Lower leg skin (tissue), 4 donors: ENCODE measurements at regions of chr12 and their contacts with region 1.

Region 1: DNA sequence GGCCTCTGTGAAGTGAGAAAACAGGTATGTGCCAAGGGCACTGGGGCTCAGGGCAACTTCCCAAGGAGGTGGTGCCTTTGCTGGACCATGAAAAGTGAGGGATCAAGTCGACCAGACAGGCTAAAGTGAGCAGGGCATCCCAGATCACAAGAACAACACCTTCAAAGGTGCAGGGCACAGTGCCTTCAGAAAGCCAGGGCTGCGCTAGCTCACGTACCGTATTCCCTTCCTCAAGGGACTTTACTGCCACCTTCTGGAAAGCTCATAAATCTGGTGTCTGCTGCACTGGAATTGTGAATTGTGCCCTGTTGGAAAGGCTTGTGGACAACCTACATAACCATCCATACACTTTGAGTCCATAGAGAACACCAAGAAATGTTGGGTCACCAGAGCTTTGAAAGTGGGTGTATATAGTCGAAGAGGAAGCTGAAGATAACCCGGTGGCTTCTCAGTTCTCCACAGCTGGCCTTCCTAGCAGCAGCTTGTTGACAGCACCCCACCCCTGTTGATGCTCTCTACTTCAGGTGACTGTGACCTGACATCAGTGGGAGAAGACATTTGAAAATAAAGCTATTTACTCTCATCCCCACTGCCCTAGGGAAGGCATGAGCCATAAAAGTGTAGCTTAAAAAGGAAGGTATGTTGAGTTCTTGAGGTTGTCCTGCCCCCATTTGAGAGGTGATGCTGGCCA is 24.5 kb downstream of the FIGNL2 start:
- DNase-seq: no peak
- H3K4me3 ChIP-seq: no peak overlapping the region
- CTCF ChIP-seq: no peak
- POLR2A ChIP-seq: no peak

Region 2: DNA sequence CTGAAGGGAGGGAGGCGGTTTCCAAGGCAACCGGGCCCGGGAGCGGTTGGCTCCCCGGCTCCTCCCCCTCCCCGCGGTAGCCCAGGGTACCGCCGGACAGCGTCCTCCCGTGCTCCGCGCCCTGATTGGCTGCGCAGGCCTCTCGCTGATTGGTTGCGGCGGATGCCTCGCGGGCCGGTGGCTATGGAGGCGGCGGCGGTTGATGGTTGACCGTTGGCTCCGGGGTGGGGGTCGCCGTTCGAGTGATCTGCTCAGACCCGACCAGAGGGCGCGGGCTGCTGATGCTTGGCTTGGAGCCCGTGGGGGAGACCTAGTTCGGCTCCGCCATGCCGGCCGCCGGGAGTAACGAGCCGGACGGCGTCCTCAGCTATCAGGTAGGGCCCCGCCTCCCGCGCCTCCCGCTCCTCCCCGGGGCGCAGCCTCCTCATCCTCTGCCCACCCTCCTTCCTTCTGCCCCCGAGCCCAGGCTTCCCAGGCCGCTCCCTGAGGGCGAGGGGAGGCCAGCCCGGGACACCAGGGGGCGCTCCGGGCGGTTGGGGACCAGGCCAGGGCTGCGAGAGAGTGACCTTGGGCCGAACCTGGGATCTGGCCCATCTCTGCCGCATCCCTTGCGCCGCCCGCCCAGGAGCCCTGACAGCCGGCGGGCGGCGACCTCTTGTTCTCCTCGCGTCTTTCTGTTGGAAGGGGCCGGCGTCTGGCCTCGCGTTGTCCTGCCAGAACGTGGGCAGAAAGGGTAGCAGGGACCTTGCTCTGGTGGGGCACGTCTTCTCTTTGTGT is 399.2 kb before region 1 on chr12 and contains the start of gene SLC4A8:
- intact Hi-C with region 1: loop called (anchors 10 kb)
- DNase-seq: peak; percentile 24 to 89
- H3K4me3 ChIP-seq: no peak within 1 kb of the TSS
- CTCF ChIP-seq: no peak
- POLR2A ChIP-seq: no peak
- total RNA-seq, gene SLC4A8: 0.04 to 0.13 (median 0.06) TPM

Region 3: DNA sequence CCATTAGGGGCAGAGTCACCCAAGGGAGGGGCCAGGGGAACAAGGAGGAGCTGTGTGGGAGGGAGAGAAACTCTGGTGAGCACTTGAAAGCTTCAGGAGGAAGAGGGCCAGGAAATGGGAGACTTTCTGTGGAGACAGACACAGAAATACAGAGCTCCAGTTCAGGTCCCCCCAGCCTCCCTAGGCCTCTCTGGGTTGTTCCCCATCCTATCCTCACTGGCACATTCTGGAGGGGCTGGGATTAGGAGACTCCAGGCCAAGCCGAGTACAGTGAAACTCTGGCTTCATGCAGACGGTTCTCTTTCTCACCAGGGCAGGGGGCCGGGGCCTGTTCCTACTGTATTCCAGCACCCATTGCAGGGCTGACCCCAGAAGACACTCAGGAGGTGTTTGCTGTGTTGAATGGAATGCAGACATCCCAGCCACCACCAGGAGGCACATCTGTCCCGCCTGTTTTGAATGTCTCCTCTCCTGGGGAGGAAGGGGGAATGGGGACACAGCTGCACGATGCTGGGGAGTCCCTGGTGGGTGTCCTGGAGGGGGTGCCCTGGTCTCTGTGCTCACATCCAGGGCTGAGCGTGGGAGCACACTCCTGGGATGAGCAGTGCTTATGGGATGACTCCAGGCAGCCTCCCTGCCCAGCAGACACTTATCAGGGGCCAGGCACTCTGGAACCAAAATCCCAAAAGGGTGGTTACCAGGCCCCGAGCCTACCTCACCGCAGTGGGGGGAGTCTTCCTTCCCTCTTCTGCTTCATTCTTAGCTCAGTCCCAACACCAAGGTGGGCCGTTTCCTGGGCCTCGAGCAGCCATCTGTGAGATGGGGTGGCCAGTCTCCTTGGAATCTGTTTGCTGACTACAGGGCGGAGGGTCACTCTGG is 567.0 kb after region 1 on chr12:
- intact Hi-C with region 1: no loop called
- DNase-seq: no peak
- H3K4me3 ChIP-seq: no peak overlapping the region
- CTCF ChIP-seq: no peak
- POLR2A ChIP-seq: no peak